CD4-positive, alpha-beta T cell (primary cell): ENCODE measurements at regions of chr2 and their contacts with region 1.

Region 1: GRCh38 chr2:68244456-68244855 is 7.9 kb downstream of the PPP3R1 start:
- DNase-seq: no peak
- ATAC-seq: no peak
- H3K4me3 ChIP-seq: no peak overlapping the region
- H3K4me3 Mint-ChIP-seq: no peak overlapping the region
- H3K27ac ChIP-seq: no peak overlapping the region
- H3K27ac Mint-ChIP-seq: no peak overlapping the region
- H3K4me1 ChIP-seq: peaks cover 57% of the 10 kb centered on the region
- H3K4me1 Mint-ChIP-seq: peaks cover 34% of the 10 kb centered on the region
- H3K27me3 ChIP-seq: no peaks in the 10 kb centered on the region
- H3K27me3 Mint-ChIP-seq: no peaks in the 10 kb centered on the region
- CTCF ChIP-seq: no peak

Region 2: DNA sequence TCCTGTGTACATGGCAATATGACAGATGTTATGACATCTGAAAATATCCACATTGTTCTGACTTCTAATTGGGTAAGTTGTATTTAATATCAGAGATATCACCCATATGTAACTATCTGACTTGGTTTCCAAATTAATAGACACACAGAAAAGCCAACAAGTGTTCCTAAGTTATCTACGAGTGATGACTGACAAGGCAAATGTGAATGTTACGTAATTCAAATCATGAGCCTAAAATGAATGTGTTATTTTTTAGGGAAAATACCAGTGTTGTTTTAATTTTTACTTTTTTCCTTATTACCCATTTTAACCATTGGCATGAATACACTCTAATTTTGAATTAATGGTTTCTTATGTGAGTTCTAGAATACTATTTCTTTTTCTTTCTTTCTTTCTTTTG is 102.6 kb before region 1 on chr2:
- CTCF ChIA-PET with region 1: no interaction called
- POLR2A ChIA-PET with region 1: no interaction called
- intact Hi-C with region 1: no loop called
- DNase-seq: no peak
- ATAC-seq: no peak
- H3K4me3 ChIP-seq: no peak overlapping the region
- H3K4me3 Mint-ChIP-seq: no peak overlapping the region
- H3K27ac ChIP-seq: no peak overlapping the region
- H3K27ac Mint-ChIP-seq: no peak overlapping the region
- H3K4me1 ChIP-seq: no peaks in the 10 kb centered on the region
- H3K4me1 Mint-ChIP-seq: no peaks in the 10 kb centered on the region
- H3K27me3 ChIP-seq: no peaks in the 10 kb centered on the region
- H3K27me3 Mint-ChIP-seq: no peaks in the 10 kb centered on the region
- CTCF ChIP-seq: no peak

Region 3: DNA sequence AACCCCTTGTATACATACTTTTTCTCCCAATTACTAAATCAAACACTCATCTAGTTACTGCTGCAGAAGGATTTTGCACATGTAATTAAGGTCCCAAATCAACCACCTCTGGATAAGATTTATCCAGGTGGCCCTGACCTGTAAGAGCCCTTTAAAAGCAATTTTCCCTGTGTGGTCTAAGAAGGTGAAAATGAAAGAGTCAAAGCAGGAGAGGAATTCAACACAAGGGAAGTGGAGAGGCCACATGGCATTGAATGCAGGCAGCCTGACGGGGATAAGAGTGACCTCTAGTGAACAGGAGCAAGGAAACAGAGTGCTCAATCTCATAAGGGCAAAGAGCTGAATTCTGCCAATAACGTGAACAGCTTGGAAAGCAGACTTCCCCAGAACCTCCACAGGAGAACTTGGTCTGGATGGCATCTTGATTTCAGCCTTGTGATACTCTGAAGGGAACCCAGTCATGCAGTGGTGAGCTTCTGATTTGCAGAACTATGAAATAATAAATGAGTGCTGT is 19.3 kb before region 1 on chr2:
- CTCF ChIA-PET with region 1: interaction called, 6 read pairs
- POLR2A ChIA-PET with region 1: interaction called, 3 read pairs
- intact Hi-C with region 1: loop called (anchors 2 kb)
- DNase-seq: peak in 8 of 14 experiments; percentile 6 to 66 (median 38)
- ATAC-seq: peak; percentile 68
- H3K4me3 ChIP-seq: no peak overlapping the region
- H3K4me3 Mint-ChIP-seq: peak overlapping the region; percentile 47
- H3K27ac ChIP-seq: no peak overlapping the region
- H3K27ac Mint-ChIP-seq: peak overlapping the region; percentile 16
- H3K4me1 ChIP-seq: peaks cover 21% of the 10 kb centered on the region
- H3K4me1 Mint-ChIP-seq: peaks cover 99% of the 10 kb centered on the region
- H3K27me3 ChIP-seq: no peaks in the 10 kb centered on the region
- H3K27me3 Mint-ChIP-seq: no peaks in the 10 kb centered on the region
- CTCF ChIP-seq: no peak

Region 4: DNA sequence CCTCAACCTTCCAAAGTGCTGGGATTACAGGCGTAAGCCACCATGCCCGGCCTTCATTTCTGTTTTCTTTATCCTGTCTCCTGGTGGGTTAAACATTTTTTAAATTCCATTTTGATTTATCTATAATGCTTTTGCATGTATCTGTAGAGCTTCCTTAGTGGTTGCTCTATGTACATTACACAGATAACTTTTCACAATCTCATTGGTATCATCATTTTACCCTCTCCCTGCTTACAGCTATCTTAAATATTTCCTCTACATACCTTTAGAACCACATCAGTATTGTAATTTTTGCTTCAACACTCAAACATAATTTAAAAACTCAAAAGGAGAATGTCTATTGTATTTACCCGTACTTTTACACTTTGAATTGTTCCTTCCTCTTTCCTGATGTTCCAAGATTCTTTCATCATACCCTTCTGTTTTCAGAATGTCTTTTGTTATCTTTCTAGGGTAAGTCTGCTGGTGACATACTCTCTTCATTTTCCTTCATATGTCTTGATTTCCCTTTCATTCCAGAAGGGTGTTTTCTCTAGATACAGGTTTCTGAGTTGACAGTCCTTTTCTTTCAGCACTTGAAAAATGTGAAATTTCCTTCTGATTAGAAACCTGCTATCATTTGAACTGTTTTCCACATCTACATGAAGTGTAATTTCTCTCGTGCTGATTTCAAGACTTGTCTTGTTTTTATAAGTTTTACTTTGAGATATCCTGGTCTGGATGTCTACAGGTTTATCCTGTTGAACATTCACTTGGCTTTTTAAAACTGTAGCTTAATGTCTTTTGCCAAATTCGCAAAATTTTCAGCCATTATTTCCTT is 14.0 kb before region 1 on chr2:
- CTCF ChIA-PET with region 1: interaction called, 6 read pairs
- POLR2A ChIA-PET with region 1: no interaction called
- intact Hi-C with region 1: loop called (anchors 2 kb)
- DNase-seq: no peak
- ATAC-seq: no peak
- H3K4me3 ChIP-seq: no peak overlapping the region
- H3K4me3 Mint-ChIP-seq: peak overlapping the region; percentile 2
- H3K27ac ChIP-seq: no peak overlapping the region
- H3K27ac Mint-ChIP-seq: peak overlapping the region; percentile 16
- H3K4me1 ChIP-seq: peaks cover 22% of the 10 kb centered on the region
- H3K4me1 Mint-ChIP-seq: peaks cover 88% of the 10 kb centered on the region
- H3K27me3 ChIP-seq: no peaks in the 10 kb centered on the region
- H3K27me3 Mint-ChIP-seq: no peaks in the 10 kb centered on the region
- CTCF ChIP-seq: no peak